Naive thymus-derived CD4-positive, alpha-beta T cell (primary cell): ENCODE measurements at regions of chr13 and their contacts with region 1.

Region 1: DNA sequence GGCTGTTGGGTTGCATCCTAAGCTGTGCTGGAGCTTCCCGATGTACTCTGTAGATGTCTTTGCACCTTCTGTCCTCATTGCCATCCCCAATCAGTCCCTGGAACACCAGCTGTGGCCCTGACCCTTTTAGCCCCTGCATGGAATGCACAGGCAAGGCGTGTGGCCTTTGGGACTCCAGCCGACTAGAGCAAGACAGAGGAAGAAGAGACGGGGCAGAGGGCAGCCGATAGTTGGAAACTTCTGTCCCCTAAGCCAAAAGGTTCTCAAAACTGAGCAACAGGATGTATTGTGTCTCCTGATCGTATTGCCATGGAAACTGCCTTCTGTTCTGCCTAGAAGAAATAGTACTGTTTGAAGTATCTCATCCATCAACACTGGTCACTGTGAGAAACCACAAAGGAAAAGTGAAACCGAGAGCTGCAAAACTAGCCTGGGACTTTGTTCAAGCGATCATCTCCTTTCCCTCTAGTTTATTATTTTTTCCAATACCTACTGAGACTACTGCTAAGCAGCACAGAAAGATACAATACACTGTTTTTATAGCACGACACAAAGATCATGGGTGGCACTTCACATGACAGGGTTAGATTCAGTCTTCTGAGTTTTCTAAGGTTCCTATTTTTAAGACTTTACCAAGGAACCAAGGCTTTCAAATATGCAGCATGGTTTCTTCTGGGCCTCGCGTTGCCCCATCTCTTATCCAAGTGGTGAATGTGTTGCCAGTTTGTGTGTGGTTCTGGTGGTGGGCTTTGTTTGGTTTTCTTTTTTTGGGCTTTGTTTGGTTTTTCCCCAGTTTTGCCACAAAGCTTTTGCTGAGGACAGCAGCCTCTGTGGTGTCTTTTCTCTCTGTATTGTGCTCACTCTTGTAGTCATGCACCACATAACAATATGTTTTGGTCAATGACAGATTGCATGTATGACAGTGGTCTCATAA is 49.2 kb upstream of the GPR183 start:
- DNase-seq: peak in 8 of 9 donors; percentile 58 to 94 (median 92)
- ATAC-seq: peak; percentile 77
- H3K4me3 ChIP-seq: peak overlapping the region; percentile 25
- H3K4me3 Mint-ChIP-seq: peak overlapping the region; percentile 66 to 86 (median 78)
- H3K27ac ChIP-seq: peak overlapping the region; percentile 95
- H3K27ac Mint-ChIP-seq: peak overlapping the region; percentile 97 to 100 (median 99)
- H3K4me1 ChIP-seq: peaks cover 95 to 97% of the 10 kb centered on the region in 2 donors
- H3K4me1 Mint-ChIP-seq: peaks cover 78 to 100% (median 100%) of the 10 kb centered on the region in 7 donors
- H3K27me3 ChIP-seq: no peaks in the 10 kb centered on the region
- H3K27me3 Mint-ChIP-seq: no peaks in the 10 kb centered on the region

Region 2: DNA sequence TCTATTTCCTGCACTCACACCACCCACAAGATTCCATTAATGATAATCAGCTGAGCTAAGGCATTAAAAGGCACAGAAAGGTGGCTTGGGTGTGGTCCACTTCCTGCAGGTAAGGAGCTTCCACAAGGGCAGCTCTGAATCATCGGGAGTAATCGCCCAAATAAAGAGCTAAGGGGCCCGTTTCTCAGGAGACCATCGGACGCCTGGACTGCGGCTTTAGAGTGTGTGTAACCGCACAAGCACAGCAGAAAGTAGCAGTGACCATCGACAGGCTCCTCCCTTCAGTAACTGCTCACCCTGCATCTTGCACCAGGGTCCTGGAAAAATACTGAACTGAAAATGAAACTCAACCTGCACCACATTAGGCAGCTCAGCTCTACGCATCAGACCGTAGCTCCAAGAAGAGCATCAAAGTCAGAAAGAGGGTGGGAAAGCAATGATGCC is 785.5 kb before region 1 on chr13:
- CTCF ChIA-PET with region 1: no interaction called
- POLR2A ChIA-PET with region 1: no interaction called
- intact Hi-C with region 1: loop called in 1 of 2 experiments (anchors 5 kb)
- DNase-seq: peak in 6 of 9 donors; percentile 51 to 72 (median 60)
- ATAC-seq: peak; percentile 70
- H3K4me3 ChIP-seq: peak overlapping the region; percentile 63
- H3K4me3 Mint-ChIP-seq: peak overlapping the region; percentile 84 to 99 (median 90)
- H3K27ac ChIP-seq: peak overlapping the region; percentile 85
- H3K27ac Mint-ChIP-seq: peak overlapping the region; percentile 84 to 98 (median 96)
- H3K4me1 ChIP-seq: peaks cover 76 to 83% of the 10 kb centered on the region in 2 donors
- H3K4me1 Mint-ChIP-seq: peaks cover 82 to 97% (median 96%) of the 10 kb centered on the region in 7 donors
- H3K27me3 ChIP-seq: no peaks in the 10 kb centered on the region
- H3K27me3 Mint-ChIP-seq: no peaks in the 10 kb centered on the region

Region 3: DNA sequence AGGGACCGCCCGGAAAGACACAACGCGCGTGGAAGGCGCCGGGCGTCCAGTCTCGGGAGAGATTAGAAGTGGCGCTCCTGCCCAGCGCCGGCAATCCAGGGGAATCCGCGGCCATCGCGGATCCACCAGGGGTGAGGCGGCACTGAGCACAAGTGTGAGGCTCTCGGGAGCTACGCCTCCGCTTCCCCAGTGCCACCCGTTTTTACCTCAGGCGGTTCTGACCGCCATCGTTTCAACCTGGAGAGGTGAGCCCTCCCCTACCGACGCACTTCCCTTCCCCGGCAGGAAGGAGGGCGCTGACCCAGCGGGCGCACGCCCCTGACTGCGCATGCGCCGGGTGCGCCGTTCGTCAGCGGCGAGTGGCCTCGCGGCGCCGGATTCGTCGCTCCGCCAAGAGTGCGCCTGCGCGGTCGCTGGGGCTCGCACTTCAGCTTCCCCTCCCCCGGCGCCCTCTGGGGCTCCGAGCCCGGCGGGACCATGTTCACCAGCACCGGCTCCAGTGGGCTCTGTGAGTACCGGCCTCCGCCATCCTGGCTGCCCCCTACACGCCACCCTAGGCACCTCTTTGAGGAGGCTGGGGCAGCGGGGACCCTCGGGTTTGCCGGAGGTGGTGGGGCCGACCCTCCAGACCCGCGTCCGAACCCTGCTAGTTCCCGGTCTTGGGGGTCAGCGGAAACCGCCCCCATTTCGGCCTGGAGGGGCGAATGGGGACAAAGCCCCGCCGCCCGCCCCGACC is 155.8 kb before region 1 on chr13 and contains the start of gene UBAC2:
- CTCF ChIA-PET with region 1: no interaction called
- POLR2A ChIA-PET with region 1: interaction called, 13 read pairs
- intact Hi-C with region 1: loop called (anchors 1 to 5 kb)
- DNase-seq: peak; percentile 95 to 99 (median 98)
- ATAC-seq: peak; percentile 88
- H3K4me3 ChIP-seq: peak within 1 kb of the TSS; percentile 74
- H3K4me3 Mint-ChIP-seq: peak within 1 kb of the TSS; percentile 90 to 100 (median 97)
- H3K27ac ChIP-seq: peak within 1 kb of the TSS; percentile 99
- H3K27ac Mint-ChIP-seq: peak within 1 kb of the TSS; percentile 92 to 98 (median 95)
- H3K4me1 ChIP-seq: peaks cover 38 to 51% of the 10 kb centered on the region in 2 donors
- H3K4me1 Mint-ChIP-seq: peaks cover 42 to 74% (median 61%) of the 10 kb centered on the region in 7 donors
- H3K27me3 ChIP-seq: no peaks in the 10 kb centered on the region
- H3K27me3 Mint-ChIP-seq: peaks cover 0 to 2% (median 0%) of the 10 kb centered on the region in 5 donors
- total RNA-seq, gene UBAC2: 63.3 to 114 (median 90.2) TPM

Region 4: DNA sequence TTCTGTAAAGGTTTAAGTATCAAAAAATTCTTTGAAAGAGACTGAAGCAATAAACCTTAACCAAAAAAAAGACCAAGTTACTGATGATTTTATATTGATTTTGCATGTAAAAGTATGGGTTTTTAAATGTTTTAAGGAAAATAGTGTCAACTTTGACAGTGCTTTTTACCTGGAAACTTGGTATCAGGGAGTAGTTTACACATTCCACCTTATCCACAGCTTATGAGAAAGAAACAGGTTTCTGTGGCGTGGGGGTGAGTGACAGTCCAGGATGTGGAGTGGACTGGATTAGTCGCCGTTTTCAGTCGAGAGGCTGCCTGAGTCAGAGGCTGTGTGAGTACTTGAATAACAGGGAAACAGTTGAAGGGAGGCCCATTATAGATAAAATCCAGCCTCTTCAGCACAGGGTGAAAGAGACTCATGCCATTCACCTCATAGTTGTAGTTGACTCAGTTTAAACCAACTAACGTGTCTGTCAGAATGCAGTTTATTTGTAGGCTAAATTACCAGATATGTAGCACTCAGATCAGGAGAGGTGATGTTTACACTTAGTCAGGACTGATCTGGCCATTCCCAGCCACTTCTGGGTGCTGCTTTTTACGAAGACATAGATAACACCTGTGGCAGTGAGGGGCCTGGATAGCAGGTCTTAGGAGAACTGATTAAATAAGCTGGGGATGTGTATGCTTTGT is 48.6 kb before region 1 on chr13:
- CTCF ChIA-PET with region 1: interaction called, 39 read pairs
- POLR2A ChIA-PET with region 1: interaction called, 205 read pairs
- intact Hi-C with region 1: loop called (anchors 1 kb)
- DNase-seq: peak in 2 of 9 donors; percentile 44 to 69
- ATAC-seq: peak; percentile 40
- H3K4me3 ChIP-seq: peak overlapping the region; percentile 89
- H3K4me3 Mint-ChIP-seq: peak overlapping the region; percentile 89 to 100 (median 94)
- H3K27ac ChIP-seq: peak overlapping the region; percentile 88
- H3K27ac Mint-ChIP-seq: peak overlapping the region; percentile 81 to 99 (median 95)
- H3K4me1 ChIP-seq: peaks cover 49 to 50% of the 10 kb centered on the region in 2 donors
- H3K4me1 Mint-ChIP-seq: peaks cover 56 to 84% (median 77%) of the 10 kb centered on the region in 7 donors
- H3K27me3 ChIP-seq: no peaks in the 10 kb centered on the region
- H3K27me3 Mint-ChIP-seq: no peaks in the 10 kb centered on the region

Region 5: DNA sequence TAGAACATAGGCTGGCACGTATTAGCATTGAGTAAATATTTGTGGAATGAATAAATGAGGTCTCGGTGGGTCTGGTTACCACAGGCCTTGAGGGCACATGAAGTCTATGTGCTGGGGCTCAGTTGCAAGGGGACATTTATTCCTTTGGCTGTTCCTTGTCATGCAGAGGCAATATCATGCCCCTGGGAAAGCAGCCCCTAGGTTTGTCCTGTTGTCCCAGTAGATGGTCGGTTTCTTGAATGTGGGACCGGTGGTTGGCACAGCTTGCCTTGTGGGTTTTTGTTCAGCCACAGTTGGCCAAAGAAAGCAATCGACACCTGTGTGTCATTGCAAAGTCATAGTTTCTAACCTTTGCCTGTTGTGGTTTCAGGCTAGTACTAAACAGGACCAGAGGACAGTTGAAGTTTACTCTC is 24.5 kb before region 1 on chr13:
- CTCF ChIA-PET with region 1: interaction called, 5 read pairs
- POLR2A ChIA-PET with region 1: interaction called, 18 read pairs
- intact Hi-C with region 1: no loop called
- DNase-seq: no peak
- ATAC-seq: no peak
- H3K4me3 ChIP-seq: no peak overlapping the region
- H3K4me3 Mint-ChIP-seq: no peak overlapping the region
- H3K27ac ChIP-seq: no peak overlapping the region
- H3K27ac Mint-ChIP-seq: peak overlapping the region in 2 of 9 donors; percentile 28
- H3K4me1 ChIP-seq: peaks cover 4 to 11% of the 10 kb centered on the region in 2 donors
- H3K4me1 Mint-ChIP-seq: peaks cover 24 to 77% (median 73%) of the 10 kb centered on the region in 7 donors
- H3K27me3 ChIP-seq: no peaks in the 10 kb centered on the region
- H3K27me3 Mint-ChIP-seq: no peaks in the 10 kb centered on the region

Region 6: DNA sequence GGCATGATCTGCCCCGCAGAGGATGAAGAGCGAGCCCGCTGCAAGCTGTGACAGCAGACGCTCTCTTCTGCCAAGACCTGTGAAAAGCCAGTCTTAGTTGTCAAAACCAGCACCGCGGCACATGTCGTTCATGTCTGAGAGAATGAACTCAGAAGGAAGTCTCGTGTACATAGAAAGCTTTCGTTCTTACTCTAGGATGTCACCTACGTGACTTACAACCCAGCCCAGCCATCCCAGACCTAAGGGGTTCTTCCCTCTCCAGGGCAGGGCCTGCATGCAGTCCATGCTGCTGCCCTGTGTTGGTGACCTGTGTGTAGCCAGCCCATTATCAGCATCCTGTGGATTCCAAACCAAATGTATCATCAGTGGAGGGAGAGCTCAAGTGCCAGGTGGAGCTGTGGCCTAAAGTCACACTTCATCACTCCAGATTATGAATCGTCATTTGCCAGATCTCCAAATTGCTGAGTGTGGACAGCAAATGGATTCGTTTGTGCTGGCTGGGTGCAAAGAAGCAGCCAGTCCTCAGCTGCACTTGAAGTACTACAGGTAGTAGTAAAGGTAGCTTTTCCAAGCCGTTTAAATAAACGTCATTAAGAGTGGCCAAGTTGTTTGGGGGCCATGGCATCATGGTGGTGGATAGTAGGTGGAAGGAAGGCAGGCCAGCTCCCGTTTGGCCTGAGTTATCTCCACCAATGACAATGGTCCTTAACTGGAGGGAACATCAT is 24.7 kb after region 1 on chr13:
- CTCF ChIA-PET with region 1: interaction called, 34 read pairs
- POLR2A ChIA-PET with region 1: interaction called, 167 read pairs
- intact Hi-C with region 1: loop called (anchors 1 kb)
- DNase-seq: peak in 8 of 9 donors; percentile 55 to 73 (median 62)
- ATAC-seq: peak; percentile 51
- H3K4me3 ChIP-seq: peak overlapping the region; percentile 1
- H3K4me3 Mint-ChIP-seq: peak overlapping the region; percentile 63 to 85 (median 76)
- H3K27ac ChIP-seq: peak overlapping the region; percentile 85
- H3K27ac Mint-ChIP-seq: peak overlapping the region; percentile 94 to 99 (median 98)
- H3K4me1 ChIP-seq: peaks cover 77 to 88% of the 10 kb centered on the region in 2 donors
- H3K4me1 Mint-ChIP-seq: peaks cover 48 to 100% (median 98%) of the 10 kb centered on the region in 7 donors
- H3K27me3 ChIP-seq: no peaks in the 10 kb centered on the region
- H3K27me3 Mint-ChIP-seq: no peaks in the 10 kb centered on the region

Region 7: DNA sequence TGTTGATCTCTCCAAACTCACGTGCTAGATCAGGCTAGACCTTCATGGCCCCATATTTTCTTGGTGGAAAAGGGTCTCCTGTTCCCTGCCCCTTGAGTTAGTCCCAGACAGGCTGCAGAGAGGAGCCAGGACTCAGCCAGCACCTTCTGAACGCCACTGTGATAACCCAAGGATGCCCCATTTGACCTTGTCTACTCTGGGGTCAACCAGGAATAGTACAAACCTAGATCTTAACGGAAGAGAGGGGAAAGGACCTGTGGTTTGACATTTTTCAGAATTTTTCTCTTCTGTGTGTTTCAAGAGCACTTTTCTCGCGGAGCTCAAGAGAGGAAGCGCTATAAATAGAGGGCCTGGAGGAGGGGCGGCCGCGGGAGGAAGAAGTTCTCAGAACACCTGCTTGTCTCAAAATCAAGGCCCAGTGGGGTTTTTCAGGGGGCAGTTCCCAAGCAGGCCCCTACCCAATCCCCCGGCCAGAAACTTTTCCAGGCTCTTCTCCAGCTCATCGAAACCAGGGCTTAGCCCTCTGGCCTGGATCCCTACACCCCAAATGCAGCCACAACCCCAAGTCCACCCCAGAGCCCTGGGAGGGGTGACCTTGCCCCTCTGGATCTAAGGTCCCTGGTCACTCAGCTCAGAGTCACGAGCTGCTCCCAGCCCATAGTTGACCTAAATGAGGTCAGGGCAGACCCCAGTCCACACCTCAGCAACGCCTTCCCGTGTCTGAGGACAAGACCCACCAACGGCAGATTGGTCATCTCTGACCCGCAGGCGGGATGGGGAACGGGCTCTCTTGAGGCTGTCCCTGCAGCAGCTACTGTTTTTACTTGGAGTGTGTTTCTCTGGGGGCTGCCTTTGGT is 69.3 kb after region 1 on chr13:
- CTCF ChIA-PET with region 1: no interaction called
- POLR2A ChIA-PET with region 1: interaction called, 9 read pairs
- intact Hi-C with region 1: loop called in 1 of 2 experiments (anchors 2 kb)
- DNase-seq: peak in 8 of 9 donors; percentile 41 to 71 (median 62)
- ATAC-seq: peak; percentile 68
- H3K4me3 ChIP-seq: peak overlapping the region; percentile 52
- H3K4me3 Mint-ChIP-seq: peak overlapping the region; percentile 69 to 85 (median 77)
- H3K27ac ChIP-seq: peak overlapping the region; percentile 83
- H3K27ac Mint-ChIP-seq: peak overlapping the region in 8 of 9 donors; percentile 91 to 99 (median 96)
- H3K4me1 ChIP-seq: peaks cover 25 to 59% of the 10 kb centered on the region in 2 donors
- H3K4me1 Mint-ChIP-seq: peaks cover 39 to 74% (median 64%) of the 10 kb centered on the region in 7 donors
- H3K27me3 ChIP-seq: no peaks in the 10 kb centered on the region
- H3K27me3 Mint-ChIP-seq: peaks cover 0 to 4% (median 0%) of the 10 kb centered on the region in 5 donors

Region 8: DNA sequence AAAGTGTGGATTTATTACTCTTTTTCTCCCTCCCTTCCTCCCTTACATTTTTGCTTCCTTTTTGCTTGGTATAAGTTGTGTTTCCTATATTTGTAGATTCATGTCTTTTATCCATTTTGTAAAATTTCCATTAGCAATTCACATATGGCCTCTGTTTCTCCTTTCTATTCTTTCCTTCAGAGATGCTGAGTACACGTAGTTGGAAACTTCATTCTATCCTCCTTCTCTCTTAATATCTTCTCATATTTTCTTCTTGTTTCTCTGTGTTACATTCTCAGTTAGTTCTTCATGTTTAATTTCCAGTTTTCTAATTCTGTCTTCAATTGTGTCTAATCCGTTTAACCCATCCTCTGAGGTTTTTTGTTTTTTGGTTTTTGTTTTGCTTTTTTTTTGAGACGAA is 426.2 kb after region 1 on chr13:
- CTCF ChIA-PET with region 1: no interaction called
- POLR2A ChIA-PET with region 1: no interaction called
- intact Hi-C with region 1: no loop called
- DNase-seq: no peak
- ATAC-seq: no peak
- H3K4me3 ChIP-seq: no peak overlapping the region
- H3K4me3 Mint-ChIP-seq: no peak overlapping the region
- H3K27ac ChIP-seq: no peak overlapping the region
- H3K27ac Mint-ChIP-seq: no peak overlapping the region
- H3K4me1 ChIP-seq: no peaks in the 10 kb centered on the region
- H3K4me1 Mint-ChIP-seq: no peaks in the 10 kb centered on the region
- H3K27me3 ChIP-seq: no peaks in the 10 kb centered on the region
- H3K27me3 Mint-ChIP-seq: no peaks in the 10 kb centered on the region